Psoas muscle (tissue), 8 donors: ENCODE measurements at regions of chr19 and their contacts with region 1.

Region 1: GRCh38 chr19:47093841-47094240 is 19.7 kb downstream of the ZC3H4 start:
- DNase-seq: peak in 1 of 2 donors; percentile 67
- ATAC-seq: peak; percentile 51 to 61 (median 56)
- H3K4me3 ChIP-seq: no peak overlapping the region
- H3K27ac ChIP-seq: peak overlapping the region; percentile 69
- H3K4me1 ChIP-seq: peaks cover 50% of the 10 kb centered on the region
- H3K27me3 ChIP-seq: no peaks in the 10 kb centered on the region
- CTCF ChIP-seq: no peak

Region 2: GRCh38 chr19:46975925-46976782 is 117.7 kb before region 1 on chr19:
- intact Hi-C with region 1: no loop called
- DNase-seq: peak; percentile 98 to 99
- ATAC-seq: peak; percentile 87 to 92 (median 88)
- H3K4me3 ChIP-seq: peak overlapping the region; percentile 30
- H3K27ac ChIP-seq: peak overlapping the region; percentile 91
- H3K4me1 ChIP-seq: peaks cover 87% of the 10 kb centered on the region
- H3K27me3 ChIP-seq: no peaks in the 10 kb centered on the region
- CTCF ChIP-seq: no peak

Region 3: GRCh38 chr19:47109541-47110375 is 15.9 kb after region 1 on chr19:
- intact Hi-C with region 1: loop called in 1 of 2 experiments (anchors 2 kb)
- DNase-seq: no peak
- ATAC-seq: no peak
- H3K4me3 ChIP-seq: peak overlapping the region; percentile 97
- H3K27ac ChIP-seq: peak overlapping the region; percentile 100
- H3K4me1 ChIP-seq: peaks cover 57% of the 10 kb centered on the region
- H3K27me3 ChIP-seq: no peaks in the 10 kb centered on the region
- CTCF ChIP-seq: no peak